ENCODE measurements at regions of chrX and their contacts with region 1.

Region 1: GRCh38 chrX:124388562-124388961 is 42.2 kb downstream of the SH2D1A start:
- DNase-seq: peak; percentile 61
- H3K4me3 Mint-ChIP-seq: no peak overlapping the region
- H3K27ac Mint-ChIP-seq: no peak overlapping the region
- H3K4me1 Mint-ChIP-seq: no peaks in the 10 kb centered on the region
- H3K27me3 Mint-ChIP-seq: peaks cover 14% of the 10 kb centered on the region
- CTCF ChIP-seq: peak; percentile 74

Region 2: GRCh38 chrX:124211312-124211942 is 177.1 kb before region 1 on chrX:
- CTCF ChIA-PET with region 1: no interaction called
- POLR2A ChIA-PET with region 1: interaction called, 3 read pairs
- intact Hi-C with region 1: loop called (anchors 5 kb)
- DNase-seq: peak; percentile 51
- H3K4me3 Mint-ChIP-seq: no peak overlapping the region
- H3K27ac Mint-ChIP-seq: no peak overlapping the region
- H3K4me1 Mint-ChIP-seq: no peaks in the 10 kb centered on the region
- H3K27me3 Mint-ChIP-seq: no peaks in the 10 kb centered on the region
- CTCF ChIP-seq: peak; percentile 45

Region 3: DNA sequence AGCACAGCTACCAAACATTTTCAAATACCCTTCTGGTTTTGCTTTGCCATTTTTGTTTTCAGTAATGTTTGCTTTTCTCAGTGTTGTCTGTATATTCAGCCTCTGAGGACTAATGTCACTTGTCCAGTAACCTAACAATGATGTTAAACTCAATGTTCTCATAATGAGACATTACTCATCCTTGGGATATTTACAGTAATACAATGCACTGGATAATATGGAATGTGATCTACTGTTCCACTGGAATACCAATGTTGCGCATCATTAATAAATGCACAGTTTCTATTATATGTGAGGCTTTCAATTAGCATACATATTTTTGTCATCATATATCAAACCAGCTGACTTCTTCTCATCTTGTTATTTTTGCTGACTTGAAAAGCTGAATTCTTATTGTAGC is 216.9 kb after region 1 on chrX:
- CTCF ChIA-PET with region 1: no interaction called
- POLR2A ChIA-PET with region 1: no interaction called
- intact Hi-C with region 1: no loop called
- DNase-seq: no peak
- H3K4me3 Mint-ChIP-seq: no peak overlapping the region
- H3K27ac Mint-ChIP-seq: no peak overlapping the region
- H3K4me1 Mint-ChIP-seq: no peaks in the 10 kb centered on the region
- H3K27me3 Mint-ChIP-seq: no peaks in the 10 kb centered on the region
- CTCF ChIP-seq: no peak